PC-3 (cell line): ENCODE measurements at regions of chr1 and their contacts with region 1.

Region 1: GRCh38 chr1:26602378-26602959 is 72.9 kb downstream of the RPS6KA1 start:
- DNase-seq: peak; percentile 87
- ATAC-seq: peak; percentile 49
- H3K4me3 ChIP-seq: no peak overlapping the region
- H3K27ac ChIP-seq: no peak overlapping the region
- H3K4me1 ChIP-seq: peaks cover 7% of the 10 kb centered on the region; the same call in 1 of the 2 replicates
- H3K27me3 ChIP-seq: no peaks in the 10 kb centered on the region
- CTCF ChIP-seq: peak; percentile 93

Region 2: GRCh38 chr1:26009796-26010460 is 592.5 kb before region 1 on chr1:
- CTCF ChIA-PET with region 1: no interaction called
- POLR2A ChIA-PET with region 1: no interaction called
- intact Hi-C with region 1: no loop called
- DNase-seq: peak; percentile 51
- ATAC-seq: peak; percentile 46; the same call in 1 of the 2 replicates
- H3K4me3 ChIP-seq: no peak overlapping the region
- H3K27ac ChIP-seq: no peak overlapping the region
- H3K4me1 ChIP-seq: no peaks in the 10 kb centered on the region
- H3K27me3 ChIP-seq: no peaks in the 10 kb centered on the region
- CTCF ChIP-seq: peak; percentile 45

Region 3: GRCh38 chr1:26645734-26646133 is 43.3 kb after region 1 on chr1:
- CTCF ChIA-PET with region 1: no interaction called
- POLR2A ChIA-PET with region 1: no interaction called
- intact Hi-C with region 1: no loop called
- DNase-seq: no peak
- ATAC-seq: no peak
- H3K4me3 ChIP-seq: no peak overlapping the region
- H3K27ac ChIP-seq: no peak overlapping the region
- H3K4me1 ChIP-seq: no peaks in the 10 kb centered on the region
- H3K27me3 ChIP-seq: no peaks in the 10 kb centered on the region
- CTCF ChIP-seq: no peak

Region 4: DNA sequence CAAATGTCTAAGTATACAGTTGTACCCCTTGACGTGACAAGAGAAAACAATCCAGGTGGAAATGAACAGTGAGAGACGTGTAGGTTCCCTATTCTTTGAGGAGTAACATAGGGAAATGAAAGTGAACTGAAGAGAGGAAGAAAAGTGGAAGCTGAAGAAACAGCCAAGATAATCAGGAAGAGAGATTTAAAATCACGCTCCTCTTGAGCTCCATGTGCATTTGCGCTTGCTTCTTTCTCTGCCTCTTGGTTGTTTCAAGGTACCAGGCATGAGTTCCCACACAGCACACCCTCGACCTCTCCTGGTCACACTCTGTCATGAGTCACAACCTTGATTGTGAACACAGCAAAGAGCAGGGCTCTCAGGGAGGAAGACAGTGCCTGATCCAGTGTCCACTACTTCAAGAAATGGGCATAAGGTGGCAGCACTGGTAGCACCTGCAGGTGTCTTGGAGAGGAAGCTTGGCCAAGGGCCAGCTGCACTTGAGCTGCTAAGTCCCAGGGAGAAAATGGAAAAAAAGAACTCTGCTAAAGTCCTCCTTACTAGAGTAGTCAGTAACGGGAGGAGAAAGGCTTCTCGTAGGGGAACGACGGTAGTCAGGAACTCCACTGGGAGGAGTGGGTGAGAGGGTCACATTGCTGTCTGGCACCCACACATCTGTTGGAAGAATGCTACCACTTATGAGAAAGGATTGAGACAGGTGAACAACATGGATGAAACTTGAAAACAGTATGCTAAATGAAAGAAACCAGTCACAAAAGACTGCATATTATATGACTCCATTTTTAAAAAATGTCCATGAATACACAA is 75.0 kb after region 1 on chr1:
- CTCF ChIA-PET with region 1: interaction called, 11 read pairs
- POLR2A ChIA-PET with region 1: no interaction called
- intact Hi-C with region 1: loop called (anchors 1 kb)
- DNase-seq: peak; percentile 93
- ATAC-seq: peak; percentile 100
- H3K4me3 ChIP-seq: peak overlapping the region; percentile 27; the same call in 1 of the 2 replicates
- H3K27ac ChIP-seq: no peak overlapping the region
- H3K4me1 ChIP-seq: peaks cover 9% of the 10 kb centered on the region
- H3K27me3 ChIP-seq: no peaks in the 10 kb centered on the region
- CTCF ChIP-seq: peak; percentile 90

Region 5: GRCh38 chr1:26726784-26727183 is 124.3 kb after region 1 on chr1:
- CTCF ChIA-PET with region 1: interaction called, 16 read pairs
- POLR2A ChIA-PET with region 1: no interaction called
- intact Hi-C with region 1: no loop called
- DNase-seq: no peak
- ATAC-seq: no peak
- H3K4me3 ChIP-seq: no peak overlapping the region
- H3K27ac ChIP-seq: no peak overlapping the region
- H3K4me1 ChIP-seq: peaks cover 53% of the 10 kb centered on the region
- H3K27me3 ChIP-seq: no peaks in the 10 kb centered on the region
- CTCF ChIP-seq: no peak